Activated B cell treated with CpG ODN at 0.5 μM for 24 hours (primary cell): ENCODE measurements at regions of chr10 and their contacts with region 1.

Region 1: GRCh38 chr10:75099952-75100763 is 11.3 kb upstream of the SAMD8 start:
- DNase-seq: peak; percentile 79
- ATAC-seq: peak; percentile 99
- H3K4me3 Mint-ChIP-seq: no peak overlapping the region
- H3K27ac Mint-ChIP-seq: no peak overlapping the region
- H3K4me1 Mint-ChIP-seq: peaks cover 1% of the 10 kb centered on the region
- H3K27me3 Mint-ChIP-seq: no peaks in the 10 kb centered on the region
- CTCF ChIP-seq: peak; percentile 92

Region 2: DNA sequence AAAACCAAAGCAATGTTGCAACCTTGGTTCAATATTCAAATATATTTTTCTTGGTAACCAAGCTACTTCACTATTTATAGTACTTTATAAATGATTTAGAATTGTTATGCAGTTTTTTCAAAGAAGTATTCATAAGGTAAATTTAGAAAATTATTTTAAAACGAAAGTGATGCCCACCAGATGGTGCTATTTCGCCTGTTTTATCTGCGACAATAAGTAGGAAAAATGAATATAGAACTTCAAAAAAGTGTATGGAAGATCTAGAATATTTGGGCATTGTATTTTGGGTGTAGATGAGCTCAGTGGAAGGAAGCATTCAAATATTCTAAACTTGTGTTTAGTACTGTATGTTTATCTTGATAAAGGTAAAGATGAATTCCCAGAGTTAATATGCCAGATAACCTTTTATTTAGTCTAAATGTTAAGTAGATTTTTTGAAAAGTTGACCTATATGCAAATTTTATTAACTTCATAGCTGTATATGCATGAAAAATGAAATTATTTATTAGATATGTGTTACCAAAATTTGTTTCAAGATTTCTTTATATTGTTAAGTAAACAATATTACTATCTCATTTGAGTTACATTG is 856.0 kb before region 1 on chr10:
- CTCF ChIA-PET with region 1: interaction called, 10 read pairs
- POLR2A ChIA-PET with region 1: no interaction called
- intact Hi-C with region 1: loop called (anchors 1 kb)
- DNase-seq: no peak
- ATAC-seq: no peak
- H3K4me3 Mint-ChIP-seq: no peak overlapping the region
- H3K27ac Mint-ChIP-seq: no peak overlapping the region
- H3K4me1 Mint-ChIP-seq: peaks cover 4% of the 10 kb centered on the region
- H3K27me3 Mint-ChIP-seq: no peaks in the 10 kb centered on the region
- CTCF ChIP-seq: peak; percentile 79

Region 3: DNA sequence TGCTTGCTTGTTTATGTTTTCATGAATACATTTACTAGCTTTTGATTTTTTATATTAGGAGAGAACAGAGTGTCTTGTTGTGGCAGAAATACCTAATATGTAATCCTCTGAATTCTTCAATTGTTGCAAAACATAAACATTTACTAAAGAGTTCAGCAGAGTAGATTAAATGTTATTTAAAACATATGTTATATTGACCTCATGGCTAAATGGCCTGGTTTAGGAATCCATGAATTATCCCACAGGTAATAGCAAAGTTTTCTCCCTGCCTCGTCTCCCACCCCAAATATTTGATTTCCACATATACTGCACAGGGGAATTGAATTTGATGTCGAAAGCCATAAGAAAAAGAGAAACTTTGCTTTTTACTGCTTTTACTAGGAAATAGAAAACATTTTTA is 837.3 kb before region 1 on chr10:
- CTCF ChIA-PET with region 1: interaction called, 7 read pairs
- POLR2A ChIA-PET with region 1: interaction called, 9 read pairs
- intact Hi-C with region 1: loop called (anchors 1 kb)
- DNase-seq: no peak
- ATAC-seq: no peak
- H3K4me3 Mint-ChIP-seq: no peak overlapping the region
- H3K27ac Mint-ChIP-seq: no peak overlapping the region
- H3K4me1 Mint-ChIP-seq: peaks cover 15% of the 10 kb centered on the region
- H3K27me3 Mint-ChIP-seq: no peaks in the 10 kb centered on the region
- CTCF ChIP-seq: no peak

Region 4: GRCh38 chr10:74419958-74420375 is 680.2 kb before region 1 on chr10:
- CTCF ChIA-PET with region 1: interaction called, 4 read pairs
- POLR2A ChIA-PET with region 1: no interaction called
- intact Hi-C with region 1: loop called (anchors 1 kb)
- DNase-seq: no peak
- ATAC-seq: peak; percentile 58
- H3K4me3 Mint-ChIP-seq: no peak overlapping the region
- H3K27ac Mint-ChIP-seq: peak overlapping the region; percentile 1
- H3K4me1 Mint-ChIP-seq: peaks cover 21% of the 10 kb centered on the region
- H3K27me3 Mint-ChIP-seq: no peaks in the 10 kb centered on the region
- CTCF ChIP-seq: no peak

Region 5: GRCh38 chr10:74738985-74739567 is 361.1 kb before region 1 on chr10:
- CTCF ChIA-PET with region 1: no interaction called
- POLR2A ChIA-PET with region 1: no interaction called
- intact Hi-C with region 1: loop called (anchors 2 kb)
- DNase-seq: no peak
- ATAC-seq: peak; percentile 68
- H3K4me3 Mint-ChIP-seq: peak overlapping the region; percentile 15
- H3K27ac Mint-ChIP-seq: peak overlapping the region; percentile 67
- H3K4me1 Mint-ChIP-seq: peaks cover 26% of the 10 kb centered on the region
- H3K27me3 Mint-ChIP-seq: no peaks in the 10 kb centered on the region
- CTCF ChIP-seq: no peak